ENCODE measurements at regions of chr2 and their contacts with region 1.

Region 1: DNA sequence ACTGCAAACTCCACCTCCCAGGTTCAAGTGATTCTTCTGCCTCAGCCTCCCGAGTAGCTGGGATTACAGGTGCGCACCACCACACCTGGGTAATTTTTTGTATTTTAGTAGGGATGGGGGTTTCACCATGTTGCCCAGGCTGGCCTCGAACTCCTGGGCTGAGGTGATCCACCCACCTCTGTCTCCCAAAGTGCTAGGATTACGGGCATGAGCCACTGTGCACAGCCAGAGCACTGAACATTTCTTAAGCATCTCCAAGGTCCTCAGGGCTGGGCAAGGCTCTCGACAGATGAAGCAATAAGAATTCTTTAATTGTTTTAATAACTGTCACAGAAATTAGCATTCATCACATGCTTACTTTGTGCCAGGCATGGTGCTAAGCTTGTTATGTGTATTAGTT is 4.1 kb downstream of the ATOH8 start:
- DNase-seq: no peak
- H3K4me3 ChIP-seq: no peak overlapping the region
- H3K27ac ChIP-seq: no peak overlapping the region
- H3K4me1 ChIP-seq: peaks cover under 1% of the 10 kb centered on the region
- H3K27me3 ChIP-seq: peaks cover 35% of the 10 kb centered on the region
- CTCF ChIP-seq: no peak

Region 2: GRCh38 chr2:85669549-85669948 is 88.3 kb before region 1 on chr2:
- CTCF ChIA-PET with region 1: no interaction called
- POLR2A ChIA-PET with region 1: no interaction called
- intact Hi-C with region 1: no loop called
- DNase-seq: no peak
- H3K4me3 ChIP-seq: no peak overlapping the region
- H3K27ac ChIP-seq: peak overlapping the region; percentile 47; the same call in 1 of the 2 replicates
- H3K4me1 ChIP-seq: peaks cover 15% of the 10 kb centered on the region
- H3K27me3 ChIP-seq: no peaks in the 10 kb centered on the region
- CTCF ChIP-seq: no peak

Region 3: GRCh38 chr2:86032861-86033595 is 275.2 kb after region 1 on chr2:
- CTCF ChIA-PET with region 1: no interaction called
- POLR2A ChIA-PET with region 1: interaction called, 11 read pairs
- intact Hi-C with region 1: no loop called
- DNase-seq: no peak
- H3K4me3 ChIP-seq: no peak overlapping the region
- H3K27ac ChIP-seq: no peak overlapping the region
- H3K4me1 ChIP-seq: no peaks in the 10 kb centered on the region
- H3K27me3 ChIP-seq: no peaks in the 10 kb centered on the region
- CTCF ChIP-seq: no peak

Measured in PC-9 (cell line).